Aorta (tissue), 5 donors: ENCODE measurements at regions of chr19 and their contacts with region 1.

Region 1: DNA sequence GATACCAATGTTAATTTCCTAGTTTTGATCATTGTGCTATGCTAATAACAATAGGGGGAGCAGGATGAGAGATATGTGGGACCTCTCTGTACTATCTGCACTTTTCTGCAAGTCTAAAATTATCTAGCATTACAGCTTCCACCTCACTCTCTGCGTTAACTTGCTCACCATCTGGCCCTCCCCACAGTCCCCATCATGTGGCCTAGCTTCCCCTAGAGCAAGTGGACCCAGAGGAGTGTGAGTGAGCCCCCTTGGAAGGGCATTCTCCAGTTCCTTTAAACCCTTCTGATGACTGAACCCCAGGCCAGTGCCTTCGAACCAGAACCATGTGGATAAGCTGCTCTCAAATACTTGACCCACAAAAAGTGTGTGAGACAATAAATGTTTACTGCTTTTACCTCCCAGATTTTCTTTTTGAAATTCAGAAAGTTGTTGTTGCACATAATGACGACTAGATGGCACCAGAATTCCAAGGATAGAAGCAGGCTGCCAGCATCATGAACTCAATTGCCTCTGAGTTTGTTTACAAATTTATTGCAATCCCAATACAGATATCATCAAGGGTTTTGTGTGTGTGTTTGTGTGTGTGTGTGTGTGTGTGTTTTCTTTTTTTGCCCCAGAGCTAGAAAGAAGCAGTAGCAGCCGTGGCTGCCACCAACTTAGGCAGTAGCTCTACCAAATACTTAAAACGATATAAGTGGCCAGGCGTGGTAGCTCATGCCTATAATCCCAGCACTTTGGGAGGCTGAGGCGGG is 49.0 kb upstream of the ZNF780A start:
- DNase-seq: no peak
- ATAC-seq: no peak
- H3K4me3 ChIP-seq: no peak overlapping the region
- H3K27ac ChIP-seq: no peak overlapping the region
- H3K4me1 ChIP-seq: no peaks in the 10 kb centered on the region
- H3K27me3 ChIP-seq: no peaks in the 10 kb centered on the region

Region 2: GRCh38 chr19:40089462-40089861 is 50.2 kb before region 1 on chr19:
- intact Hi-C with region 1: no loop called
- DNase-seq: no peak
- ATAC-seq: no peak
- H3K4me3 ChIP-seq: peak overlapping the region in 1 of 2 donors; percentile 75
- H3K27ac ChIP-seq: no peak overlapping the region
- H3K4me1 ChIP-seq: peaks cover 0 to 3% of the 10 kb centered on the region in 2 donors
- H3K27me3 ChIP-seq: no peaks in the 10 kb centered on the region

Region 3: GRCh38 chr19:40221858-40222837 is 82.4 kb after region 1 on chr19:
- intact Hi-C with region 1: loop called (anchors 1 to 2 kb)
- DNase-seq: peak; percentile 85 to 89
- ATAC-seq: peak; percentile 87
- H3K4me3 ChIP-seq: no peak overlapping the region
- H3K27ac ChIP-seq: no peak overlapping the region
- H3K4me1 ChIP-seq: no peaks in the 10 kb centered on the region
- H3K27me3 ChIP-seq: no peaks in the 10 kb centered on the region